ENCODE measurements at regions of chr1 and their contacts with region 1.

Region 1: GRCh38 chr1:202501281-202501680 is 152.8 kb downstream of the PPP1R12B start:
- DNase-seq: no peak
- H3K4me3 ChIP-seq: no peak overlapping the region
- H3K27ac ChIP-seq: peak overlapping the region in 1 of 2 donors; percentile 45
- H3K4me1 ChIP-seq: peaks cover 0 to 23% of the 10 kb centered on the region in 2 donors
- H3K27me3 ChIP-seq: no peaks in the 10 kb centered on the region
- CTCF ChIP-seq: peak; percentile 35 to 62 (median 59)

Region 2: GRCh38 chr1:202348509-202349205 is 152.6 kb before region 1 on chr1 and contains the start of gene PPP1R12B:
- intact Hi-C with region 1: no loop called
- DNase-seq: peak; percentile 94 to 99
- H3K4me3 ChIP-seq: peak within 1 kb of the TSS; percentile 90 to 99
- H3K27ac ChIP-seq: peak within 1 kb of the TSS; percentile 82 to 87
- H3K4me1 ChIP-seq: peaks cover 0 to 4% of the 10 kb centered on the region in 2 donors
- H3K27me3 ChIP-seq: no peaks in the 10 kb centered on the region
- CTCF ChIP-seq: no peak
- total RNA-seq, gene PPP1R12B: 404 TPM

Region 3: GRCh38 chr1:202540014-202540413 is 38.7 kb after region 1 on chr1:
- intact Hi-C with region 1: loop called (anchors 2 kb)
- DNase-seq: no peak
- H3K4me3 ChIP-seq: peak overlapping the region; percentile 68 to 77
- H3K27ac ChIP-seq: peak overlapping the region; percentile 92 to 95
- H3K4me1 ChIP-seq: peaks cover 0 to 14% of the 10 kb centered on the region in 2 donors
- H3K27me3 ChIP-seq: no peaks in the 10 kb centered on the region
- CTCF ChIP-seq: no peak

Region 4: GRCh38 chr1:202571347-202572339 is 70.4 kb after region 1 on chr1:
- intact Hi-C with region 1: loop called (anchors 5 kb)
- DNase-seq: no peak
- H3K4me3 ChIP-seq: no peak overlapping the region
- H3K27ac ChIP-seq: peak overlapping the region; percentile 70 to 79
- H3K4me1 ChIP-seq: peaks cover 12 to 75% of the 10 kb centered on the region in 2 donors
- H3K27me3 ChIP-seq: no peaks in the 10 kb centered on the region
- CTCF ChIP-seq: peak; percentile 61 to 73 (median 66)

Region 5: GRCh38 chr1:202599677-202600431 is 98.6 kb after region 1 on chr1:
- intact Hi-C with region 1: loop called (anchors 2 kb)
- DNase-seq: peak in 1 of 2 donors; percentile 82
- H3K4me3 ChIP-seq: no peak overlapping the region
- H3K27ac ChIP-seq: peak overlapping the region; percentile 45 to 69
- H3K4me1 ChIP-seq: peaks cover 0 to 5% of the 10 kb centered on the region in 2 donors
- H3K27me3 ChIP-seq: no peaks in the 10 kb centered on the region
- CTCF ChIP-seq: peak; percentile 70 to 84 (median 83)

Region 6: GRCh38 chr1:202625416-202626360 is 124.4 kb after region 1 on chr1:
- intact Hi-C with region 1: loop called (anchors 1 kb)
- DNase-seq: peak in 1 of 2 donors; percentile 81
- H3K4me3 ChIP-seq: no peak overlapping the region
- H3K27ac ChIP-seq: no peak overlapping the region
- H3K4me1 ChIP-seq: peaks cover 11 to 21% of the 10 kb centered on the region in 2 donors
- H3K27me3 ChIP-seq: no peaks in the 10 kb centered on the region
- CTCF ChIP-seq: peak; percentile 75 to 80 (median 78)